Activated B cell treated with CpG ODN at 0.5 μM for 24 hours (primary cell): ENCODE measurements at regions of chr9 and their contacts with region 1.

Region 1: GRCh38 chr9:89464300-89464901 is 33.5 kb downstream of the SEMA4D start:
- DNase-seq: peak; percentile 23
- ATAC-seq: peak; percentile 49
- H3K4me3 Mint-ChIP-seq: peak overlapping the region; percentile 72
- H3K27ac Mint-ChIP-seq: peak overlapping the region; percentile 80
- H3K4me1 Mint-ChIP-seq: peaks cover 90% of the 10 kb centered on the region
- H3K27me3 Mint-ChIP-seq: no peaks in the 10 kb centered on the region
- CTCF ChIP-seq: no peak

Region 2: GRCh38 chr9:89448381-89448780 is 16.0 kb before region 1 on chr9:
- CTCF ChIA-PET with region 1: no interaction called
- POLR2A ChIA-PET with region 1: no interaction called
- intact Hi-C with region 1: no loop called
- DNase-seq: no peak
- ATAC-seq: peak; percentile 37
- H3K4me3 Mint-ChIP-seq: peak overlapping the region; percentile 11
- H3K27ac Mint-ChIP-seq: peak overlapping the region; percentile 46
- H3K4me1 Mint-ChIP-seq: peaks cover 60% of the 10 kb centered on the region
- H3K27me3 Mint-ChIP-seq: no peaks in the 10 kb centered on the region
- CTCF ChIP-seq: no peak

Region 3: GRCh38 chr9:89483592-89484522 is 19.5 kb after region 1 on chr9:
- CTCF ChIA-PET with region 1: no interaction called
- POLR2A ChIA-PET with region 1: interaction called, 4 read pairs
- intact Hi-C with region 1: loop called (anchors 1 kb)
- DNase-seq: peak; percentile 52
- ATAC-seq: peak; percentile 82
- H3K4me3 Mint-ChIP-seq: peak overlapping the region; percentile 80
- H3K27ac Mint-ChIP-seq: peak overlapping the region; percentile 79
- H3K4me1 Mint-ChIP-seq: peaks cover 79% of the 10 kb centered on the region
- H3K27me3 Mint-ChIP-seq: no peaks in the 10 kb centered on the region
- CTCF ChIP-seq: no peak